T-cell (primary cell): ENCODE measurements at regions of chr4 and their contacts with region 1.

Region 1: GRCh38 chr4:6688879-6689505 is 4.7 kb upstream of the S100P start:
- DNase-seq: peak; percentile 29 to 81 (median 56)
- ATAC-seq: peak; percentile 77 to 86 (median 83)
- H3K4me3 ChIP-seq: peak overlapping the region in 1 of 2 donors; percentile 63
- H3K4me3 Mint-ChIP-seq: peak overlapping the region; percentile 73 to 90 (median 79)
- H3K27ac ChIP-seq: peak overlapping the region; percentile 87
- H3K27ac Mint-ChIP-seq: peak overlapping the region; percentile 99 to 100
- H3K4me1 ChIP-seq: peaks cover 39 to 85% of the 10 kb centered on the region in 2 experiments
- H3K4me1 Mint-ChIP-seq: peaks cover 56 to 81% (median 77%) of the 10 kb centered on the region in 3 donors
- H3K27me3 ChIP-seq: no peaks in the 10 kb centered on the region
- H3K27me3 Mint-ChIP-seq: no peaks in the 10 kb centered on the region

Region 2: GRCh38 chr4:6709230-6710114 is 20.5 kb after region 1 on chr4 and contains the start of gene MRFAP1L1:
- CTCF ChIA-PET with region 1: interaction called in 1 of 2 experiments, 8 read pairs
- POLR2A ChIA-PET with region 1: interaction called, 3 to 10 read pairs
- DNase-seq: peak; percentile 92 to 99 (median 97)
- ATAC-seq: peak; percentile 83 to 90 (median 86)
- H3K4me3 ChIP-seq: peak within 1 kb of the TSS; percentile 67 to 87
- H3K4me3 Mint-ChIP-seq: peak within 1 kb of the TSS; percentile 96 to 100 (median 97)
- H3K27ac ChIP-seq: peak within 1 kb of the TSS; percentile 71
- H3K27ac Mint-ChIP-seq: peak within 1 kb of the TSS; percentile 97 to 99
- H3K4me1 ChIP-seq: peaks cover 22 to 39% of the 10 kb centered on the region in 2 experiments
- H3K4me1 Mint-ChIP-seq: peaks cover 60 to 71% (median 62%) of the 10 kb centered on the region in 3 donors
- H3K27me3 ChIP-seq: no peaks in the 10 kb centered on the region
- H3K27me3 Mint-ChIP-seq: no peaks in the 10 kb centered on the region
- total RNA-seq, gene MRFAP1L1: 28.8 to 121 (median 112) TPM

Region 3: GRCh38 chr4:6716018-6716911 is 27.3 kb after region 1 on chr4 and contains the start of gene BLOC1S4:
- CTCF ChIA-PET with region 1: interaction called in 1 of 2 experiments, 15 read pairs
- POLR2A ChIA-PET with region 1: interaction called in 1 of 2 experiments, 3 read pairs
- DNase-seq: peak; percentile 78 to 99 (median 87)
- ATAC-seq: peak; percentile 85 to 90 (median 86)
- H3K4me3 ChIP-seq: peak within 1 kb of the TSS; percentile 87 to 90
- H3K4me3 Mint-ChIP-seq: peak within 1 kb of the TSS; percentile 90 to 96 (median 91)
- H3K27ac ChIP-seq: peak within 1 kb of the TSS; percentile 82
- H3K27ac Mint-ChIP-seq: peak within 1 kb of the TSS; percentile 87 to 95
- H3K4me1 ChIP-seq: peaks cover 15 to 27% of the 10 kb centered on the region in 2 experiments
- H3K4me1 Mint-ChIP-seq: peaks cover 34 to 42% (median 42%) of the 10 kb centered on the region in 3 donors
- H3K27me3 ChIP-seq: no peaks in the 10 kb centered on the region
- H3K27me3 Mint-ChIP-seq: no peaks in the 10 kb centered on the region
- total RNA-seq, gene BLOC1S4: 20.7 to 41.9 (median 36.6) TPM

Region 4: GRCh38 chr4:7335344-7336069 is 646.5 kb after region 1 on chr4:
- CTCF ChIA-PET with region 1: no interaction called
- POLR2A ChIA-PET with region 1: no interaction called
- DNase-seq: peak in 28 of 35 experiments; percentile 8 to 59 (median 24)
- ATAC-seq: peak in 1 of 4 experiments; percentile 31
- H3K4me3 ChIP-seq: no peak overlapping the region
- H3K4me3 Mint-ChIP-seq: no peak overlapping the region
- H3K27ac ChIP-seq: no peak overlapping the region
- H3K27ac Mint-ChIP-seq: no peak overlapping the region
- H3K4me1 ChIP-seq: peaks cover 0 to 5% of the 10 kb centered on the region in 2 experiments
- H3K4me1 Mint-ChIP-seq: no peaks in the 10 kb centered on the region
- H3K27me3 ChIP-seq: peaks cover 0 to 23% of the 10 kb centered on the region in 2 experiments
- H3K27me3 Mint-ChIP-seq: peaks cover 0 to 4% of the 10 kb centered on the region in 2 donors